Right ventricle myocardium superior (tissue), 1 donor: ENCODE measurements at regions of chr2 and their contacts with region 1.

Region 1: GRCh38 chr2:206518997-206519396 is 75.7 kb downstream of the ADAM23 start:
- DNase-seq: no peak
- ATAC-seq: no peak

Region 2: GRCh38 chr2:206442833-206443734 is 75.9 kb before region 1 on chr2 and contains the start of gene ADAM23:
- intact Hi-C with region 1: loop called (anchors 10 kb)
- DNase-seq: peak; percentile 70
- ATAC-seq: peak; percentile 84
- total RNA-seq, gene ADAM23: 58.9 TPM